Stomach (tissue), 19 donors: ENCODE measurements at regions of chr15 and their contacts with region 1.

Region 1: GRCh38 chr15:58749532-58750337 is at the start of gene ADAM10:
- DNase-seq: peak; percentile 99
- H3K4me3 ChIP-seq: peak within 1 kb of the TSS; percentile 85 to 97 (median 96)
- H3K27ac ChIP-seq: peak within 1 kb of the TSS; percentile 96 to 98 (median 97)
- H3K4me1 ChIP-seq: peaks cover 11 to 34% (median 24%) of the 10 kb centered on the region in 4 donors
- H3K27me3 ChIP-seq: no peaks in the 10 kb centered on the region
- CTCF ChIP-seq: no peak
- EP300 ChIP-seq: no peak
- POLR2A ChIP-seq: peak in 2 of 4 donors; percentile 39 to 85
- total RNA-seq, gene ADAM10: 13.9 to 159 (median 21.0) TPM

Region 2: DNA sequence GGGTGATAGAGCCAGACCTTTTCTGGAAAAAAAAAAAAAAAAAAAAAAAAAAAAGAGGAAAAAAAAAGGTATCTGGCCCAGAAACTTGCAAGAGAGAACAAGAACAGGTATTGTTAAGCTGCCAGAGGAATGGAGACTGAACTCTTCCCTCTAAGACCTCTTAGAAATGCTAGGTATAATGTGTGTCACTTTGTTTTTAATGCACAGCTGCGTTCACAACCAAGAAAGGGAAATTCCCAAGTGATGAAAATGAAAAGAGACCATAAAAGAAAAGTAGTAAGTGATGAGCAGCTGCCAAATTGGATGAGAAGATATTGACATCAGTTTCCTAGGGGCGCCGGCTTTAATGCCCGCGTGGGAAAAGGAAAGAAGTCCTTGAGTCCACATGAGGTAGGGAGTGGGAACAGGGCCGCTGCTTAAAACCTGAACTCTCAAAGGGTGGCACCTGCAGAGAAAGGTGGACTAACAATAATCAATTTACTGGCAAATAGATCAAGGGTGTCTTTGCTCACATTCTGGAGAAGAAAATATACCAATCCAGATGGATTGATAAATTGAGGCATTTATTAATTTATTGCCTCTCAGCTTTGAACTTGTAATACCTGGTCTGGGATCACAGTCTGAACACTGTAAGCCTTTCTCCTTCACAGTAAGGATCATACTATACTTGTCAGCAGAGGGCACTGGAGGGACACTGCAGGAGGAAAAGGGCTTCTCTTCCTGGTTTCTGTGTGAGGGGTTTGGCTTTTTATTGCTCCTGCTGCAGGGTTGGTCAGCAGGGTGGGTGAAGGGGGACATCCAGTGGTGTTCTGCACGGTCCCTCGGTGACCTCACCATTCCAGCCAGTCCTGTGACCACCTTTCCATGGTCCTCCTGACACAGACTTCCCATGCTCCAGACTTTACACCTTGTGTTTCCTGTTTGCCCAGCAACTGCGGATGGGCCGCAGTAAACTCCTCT is 480.0 kb before region 1 on chr15:
- intact Hi-C with region 1: loop called (anchors 10 kb)
- DNase-seq: peak in 1 of 2 donors; percentile 89
- H3K4me3 ChIP-seq: no peak overlapping the region
- H3K27ac ChIP-seq: peak overlapping the region in 1 of 5 donors; percentile 8
- H3K4me1 ChIP-seq: peaks cover 0 to 3% (median 0%) of the 10 kb centered on the region in 4 donors
- H3K27me3 ChIP-seq: no peaks in the 10 kb centered on the region
- CTCF ChIP-seq: peak in 4 of 7 experiments; percentile 50 to 62 (median 54)
- EP300 ChIP-seq: no peak
- POLR2A ChIP-seq: no peak

Region 3: DNA sequence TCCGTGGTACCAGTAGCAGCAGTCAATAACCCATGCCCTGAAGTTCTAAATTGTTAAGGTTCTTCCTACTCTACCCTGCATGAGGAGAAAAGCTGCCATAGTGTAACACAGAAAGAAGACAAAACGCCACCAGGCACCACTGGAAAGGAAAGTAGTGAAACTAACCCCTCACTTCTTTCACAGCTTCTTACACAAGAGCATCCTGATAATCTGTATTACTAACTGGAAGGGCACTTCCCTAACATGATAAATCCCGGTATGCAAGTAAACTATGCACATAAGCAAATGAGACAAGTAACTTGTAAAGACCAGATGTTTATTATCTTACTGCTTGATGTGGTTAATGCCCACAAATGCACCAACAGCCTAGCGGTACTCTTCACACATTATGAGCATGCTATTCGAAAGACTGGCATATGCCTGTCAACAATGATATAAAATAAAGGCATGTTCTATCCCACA is 141.6 kb before region 1 on chr15:
- intact Hi-C with region 1: no loop called
- DNase-seq: peak in 1 of 2 donors; percentile 4
- H3K4me3 ChIP-seq: no peak overlapping the region
- H3K27ac ChIP-seq: no peak overlapping the region
- H3K4me1 ChIP-seq: peaks cover 0 to 21% (median 19%) of the 10 kb centered on the region in 4 donors
- H3K27me3 ChIP-seq: no peaks in the 10 kb centered on the region
- CTCF ChIP-seq: no peak
- EP300 ChIP-seq: no peak
- POLR2A ChIP-seq: no peak

Region 4: DNA sequence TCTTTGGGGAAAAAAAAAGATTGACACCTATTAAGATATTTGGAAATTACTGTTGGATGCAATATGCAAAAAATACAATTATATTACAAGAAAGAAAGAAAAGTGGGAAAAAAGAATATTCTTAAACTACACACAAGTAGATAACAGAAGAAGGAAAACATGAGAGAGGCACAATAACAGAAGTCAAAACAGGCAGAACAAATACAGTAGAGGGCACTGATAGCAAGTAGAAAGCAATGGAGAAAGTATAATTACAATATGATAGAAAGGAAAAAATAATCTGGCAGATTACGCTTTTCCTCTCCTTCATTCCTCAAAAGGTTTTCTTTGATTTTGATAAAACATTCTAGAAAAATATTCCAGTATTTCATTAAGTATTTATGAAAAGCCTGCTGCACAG is 72.3 kb before region 1 on chr15:
- intact Hi-C with region 1: no loop called
- DNase-seq: no peak
- H3K4me3 ChIP-seq: no peak overlapping the region
- H3K27ac ChIP-seq: no peak overlapping the region
- H3K4me1 ChIP-seq: peaks cover 0 to 7% (median 5%) of the 10 kb centered on the region in 4 donors
- H3K27me3 ChIP-seq: no peaks in the 10 kb centered on the region
- CTCF ChIP-seq: no peak
- EP300 ChIP-seq: no peak
- POLR2A ChIP-seq: no peak

Region 5: GRCh38 chr15:59138243-59138642 is 388.5 kb after region 1 on chr15:
- intact Hi-C with region 1: no loop called
- DNase-seq: peak; percentile 50 to 57
- H3K4me3 ChIP-seq: no peak overlapping the region
- H3K27ac ChIP-seq: no peak overlapping the region
- H3K4me1 ChIP-seq: no peaks in the 10 kb centered on the region
- H3K27me3 ChIP-seq: no peaks in the 10 kb centered on the region
- CTCF ChIP-seq: peak in 5 of 7 experiments; percentile 18 to 52 (median 40)
- EP300 ChIP-seq: no peak
- POLR2A ChIP-seq: no peak